ENCODE measurements at regions of chr2 and their contacts with region 1.

Region 1: DNA sequence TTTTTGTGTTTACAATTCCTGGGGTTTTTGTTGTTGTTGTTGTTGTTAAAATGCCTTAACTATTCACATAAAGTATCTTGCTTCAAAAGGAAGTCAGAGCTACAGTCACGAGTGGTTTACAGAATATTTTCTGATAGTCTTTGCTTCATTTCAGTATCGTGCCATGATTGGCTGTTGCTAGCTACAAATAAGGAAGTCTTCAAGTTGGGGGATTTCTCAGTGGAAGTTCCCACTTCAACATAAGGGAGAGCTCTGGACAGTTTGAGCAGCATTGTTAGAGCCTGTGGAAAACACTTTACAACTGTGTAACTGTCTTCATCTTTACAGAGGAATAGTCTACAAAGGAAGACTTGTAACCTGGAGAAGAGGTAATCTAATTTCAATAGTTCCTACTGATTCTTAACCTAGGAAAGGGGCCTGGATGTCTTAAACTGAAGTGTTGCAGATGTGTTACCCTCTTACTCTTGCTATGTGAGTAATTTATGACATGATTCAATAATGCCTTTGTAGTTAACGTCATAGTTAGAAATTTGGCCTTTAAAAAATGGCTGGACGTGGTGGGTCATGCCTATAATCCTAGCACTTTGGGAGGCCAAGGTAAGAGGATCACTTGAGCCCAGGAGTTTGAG is 23.4 kb upstream of the TANK start:
- DNase-seq: peak; percentile 93
- ATAC-seq: peak; percentile 94
- H3K4me3 ChIP-seq: peak overlapping the region; percentile 62 to 94 (median 79)
- H3K4me3 Mint-ChIP-seq: peak overlapping the region; percentile 99
- H3K27ac ChIP-seq: peak overlapping the region; percentile 97 to 100
- H3K27ac Mint-ChIP-seq: peak overlapping the region; percentile 97
- H3K4me1 ChIP-seq: peaks cover 23 to 35% of the 10 kb centered on the region in 2 donors
- H3K4me1 Mint-ChIP-seq: peaks cover 53% of the 10 kb centered on the region
- H3K27me3 ChIP-seq: no peaks in the 10 kb centered on the region
- H3K27me3 Mint-ChIP-seq: no peaks in the 10 kb centered on the region
- CTCF ChIP-seq: no peak

Region 2: GRCh38 chr2:161090411-161090810 is 46.4 kb before region 1 on chr2:
- CTCF ChIA-PET with region 1: interaction called, 4 read pairs
- POLR2A ChIA-PET with region 1: interaction called, 4 read pairs
- intact Hi-C with region 1: loop called (anchors 2 kb)
- DNase-seq: peak; percentile 58
- ATAC-seq: peak; percentile 56
- H3K4me3 ChIP-seq: peak overlapping the region; percentile 11 to 58 (median 23)
- H3K4me3 Mint-ChIP-seq: peak overlapping the region; percentile 60
- H3K27ac ChIP-seq: peak overlapping the region in 1 of 2 donors; percentile 43
- H3K27ac Mint-ChIP-seq: peak overlapping the region; percentile 84
- H3K4me1 ChIP-seq: peaks cover 30 to 33% of the 10 kb centered on the region in 2 donors
- H3K4me1 Mint-ChIP-seq: peaks cover 45% of the 10 kb centered on the region
- H3K27me3 ChIP-seq: no peaks in the 10 kb centered on the region
- H3K27me3 Mint-ChIP-seq: no peaks in the 10 kb centered on the region
- CTCF ChIP-seq: no peak

Region 3: DNA sequence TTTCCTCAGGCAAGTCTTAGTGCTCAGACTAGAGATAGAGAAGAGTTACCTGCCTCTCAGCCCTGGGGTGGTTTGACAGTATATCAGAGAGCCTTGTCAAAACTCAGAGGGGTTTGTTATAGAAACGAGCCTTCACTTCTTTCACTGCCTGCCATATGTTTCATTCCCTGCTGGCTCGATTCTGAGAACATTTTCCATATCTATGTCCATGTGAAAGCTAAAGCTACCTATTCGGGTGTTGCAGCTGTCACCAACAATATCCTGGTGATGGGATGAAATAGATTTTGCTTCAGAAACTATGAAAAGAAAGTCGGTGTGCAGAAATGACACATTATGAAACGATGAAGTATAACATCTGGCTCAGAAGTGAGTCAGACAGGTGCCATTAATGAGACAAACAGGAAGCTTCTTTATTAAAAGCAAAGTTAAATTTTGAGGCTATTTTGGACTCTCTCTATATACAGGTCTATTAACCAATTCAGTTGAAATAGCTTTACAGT is 32.7 kb before region 1 on chr2:
- CTCF ChIA-PET with region 1: no interaction called
- POLR2A ChIA-PET with region 1: no interaction called
- intact Hi-C with region 1: loop called (anchors 5 kb)
- DNase-seq: peak; percentile 14
- ATAC-seq: peak; percentile 33
- H3K4me3 ChIP-seq: peak overlapping the region in 1 of 5 experiments; percentile 43
- H3K4me3 Mint-ChIP-seq: peak overlapping the region; percentile 83
- H3K27ac ChIP-seq: no peak overlapping the region
- H3K27ac Mint-ChIP-seq: peak overlapping the region; percentile 72
- H3K4me1 ChIP-seq: peaks cover 0 to 6% of the 10 kb centered on the region in 2 donors
- H3K4me1 Mint-ChIP-seq: peaks cover 19% of the 10 kb centered on the region
- H3K27me3 ChIP-seq: peaks cover 0 to 4% (median 0%) of the 10 kb centered on the region in 4 experiments
- H3K27me3 Mint-ChIP-seq: no peaks in the 10 kb centered on the region
- CTCF ChIP-seq: no peak

Region 4: GRCh38 chr2:161172901-161173540 is 36.2 kb after region 1 on chr2:
- CTCF ChIA-PET with region 1: no interaction called
- POLR2A ChIA-PET with region 1: no interaction called
- intact Hi-C with region 1: loop called (anchors 5 kb)
- DNase-seq: no peak
- ATAC-seq: no peak
- H3K4me3 ChIP-seq: no peak overlapping the region
- H3K4me3 Mint-ChIP-seq: peak overlapping the region; percentile 21
- H3K27ac ChIP-seq: no peak overlapping the region
- H3K27ac Mint-ChIP-seq: peak overlapping the region; percentile 15
- H3K4me1 ChIP-seq: peaks cover 69 to 70% of the 10 kb centered on the region in 2 donors
- H3K4me1 Mint-ChIP-seq: peaks cover 86% of the 10 kb centered on the region
- H3K27me3 ChIP-seq: no peaks in the 10 kb centered on the region
- H3K27me3 Mint-ChIP-seq: no peaks in the 10 kb centered on the region
- CTCF ChIP-seq: no peak

Region 5: GRCh38 chr2:161223139-161223732 is 86.4 kb after region 1 on chr2:
- CTCF ChIA-PET with region 1: no interaction called
- POLR2A ChIA-PET with region 1: no interaction called
- intact Hi-C with region 1: loop called (anchors 5 kb)
- DNase-seq: peak; percentile 62
- ATAC-seq: peak; percentile 66
- H3K4me3 ChIP-seq: no peak overlapping the region
- H3K4me3 Mint-ChIP-seq: no peak overlapping the region
- H3K27ac ChIP-seq: no peak overlapping the region
- H3K27ac Mint-ChIP-seq: no peak overlapping the region
- H3K4me1 ChIP-seq: no peaks in the 10 kb centered on the region
- H3K4me1 Mint-ChIP-seq: no peaks in the 10 kb centered on the region
- H3K27me3 ChIP-seq: no peaks in the 10 kb centered on the region
- H3K27me3 Mint-ChIP-seq: no peaks in the 10 kb centered on the region
- CTCF ChIP-seq: peak; percentile 91